Gastrocnemius medialis (tissue), 4 donors: ENCODE measurements at regions of chr9 and their contacts with region 1.

Region 1: GRCh38 chr9:76562511-76562911 is 103.5 kb downstream of the GCNT1 start:
- DNase-seq: no peak
- ATAC-seq: no peak
- H3K4me3 ChIP-seq: no peak overlapping the region
- H3K27ac ChIP-seq: no peak overlapping the region
- H3K4me1 ChIP-seq: no peaks in the 10 kb centered on the region
- H3K27me3 ChIP-seq: no peaks in the 10 kb centered on the region
- CTCF ChIP-seq: no peak
- POLR2A ChIP-seq: no peak

Region 2: GRCh38 chr9:76458903-76459690 is 103.4 kb before region 1 on chr9 and contains the start of gene GCNT1:
- in situ Hi-C with region 1: loop called in 1 of 4 experiments (anchors 25 kb)
- intact Hi-C with region 1: no loop called
- DNase-seq: peak; percentile 35 to 46
- ATAC-seq: peak; percentile 30 to 60
- H3K4me3 ChIP-seq: peak within 1 kb of the TSS; percentile 53 to 75 (median 63)
- H3K27ac ChIP-seq: peak within 1 kb of the TSS in 3 of 4 donors; percentile 28 to 57 (median 38)
- H3K4me1 ChIP-seq: no peaks in the 10 kb centered on the region
- H3K27me3 ChIP-seq: peaks cover 2 to 14% (median 3%) of the 10 kb centered on the region in 3 donors
- CTCF ChIP-seq: peak in 2 of 5 experiments; percentile 22 to 30
- POLR2A ChIP-seq: peak; percentile 28 to 46
- total RNA-seq, gene GCNT1: 0.98 to 6.6 (median 4.2) TPM